Upper lobe of right lung (tissue), 1 donor: ENCODE measurements at regions of chr7 and their contacts with region 1.

Region 1: GRCh38 chr7:17608114-17608833 is 309.8 kb downstream of the AHR start:
- DNase-seq: no peak
- ATAC-seq: no peak
- H3K4me3 ChIP-seq: no peak overlapping the region
- H3K27ac ChIP-seq: no peak overlapping the region
- H3K4me1 ChIP-seq: no peaks in the 10 kb centered on the region
- H3K27me3 ChIP-seq: no peaks in the 10 kb centered on the region
- CTCF ChIP-seq: no peak

Region 2: DNA sequence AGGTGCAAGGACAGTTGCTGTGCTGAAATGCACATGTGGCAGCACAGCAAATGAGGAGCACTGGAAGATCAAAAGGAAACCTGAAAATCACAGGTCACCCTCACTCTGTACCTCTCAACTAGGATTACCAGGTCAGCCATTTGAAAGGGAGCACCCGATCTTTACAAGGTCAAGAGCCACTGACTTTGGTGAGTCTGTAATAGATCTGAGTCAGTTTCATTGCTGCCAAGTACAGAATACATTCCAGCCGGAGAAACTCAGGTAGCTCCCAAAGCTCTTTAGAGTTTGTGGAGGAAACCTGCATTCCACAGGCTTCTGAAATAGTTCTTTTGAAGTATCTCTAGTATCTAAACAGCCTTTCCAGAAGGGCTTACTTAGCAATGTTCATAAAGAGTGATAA is 114.5 kb after region 1 on chr7:
- intact Hi-C with region 1: loop called (anchors 5 kb)
- DNase-seq: no peak
- ATAC-seq: peak; percentile 68
- H3K4me3 ChIP-seq: no peak overlapping the region
- H3K27ac ChIP-seq: no peak overlapping the region
- H3K4me1 ChIP-seq: no peaks in the 10 kb centered on the region
- H3K27me3 ChIP-seq: no peaks in the 10 kb centered on the region
- CTCF ChIP-seq: no peak